ENCODE measurements at regions of chr6 and their contacts with region 1.

Region 1: GRCh38 chr6:30102970-30103874 is 9.7 kb downstream of the TRIM31 start:
- DNase-seq: peak; percentile 84
- H3K27ac ChIP-seq: peak overlapping the region; percentile 38
- CTCF ChIP-seq: peak; percentile 90

Region 2: GRCh38 chr6:30130887-30131862 is 28.0 kb after region 1 on chr6:
- CTCF ChIA-PET with region 1: interaction called, 32 read pairs
- POLR2A ChIA-PET with region 1: interaction called, 4 read pairs
- DNase-seq: peak; percentile 84
- H3K27ac ChIP-seq: no peak overlapping the region
- CTCF ChIP-seq: peak; percentile 97

Region 3: GRCh38 chr6:30154709-30155519 is 51.7 kb after region 1 on chr6:
- CTCF ChIA-PET with region 1: no interaction called
- POLR2A ChIA-PET with region 1: no interaction called
- DNase-seq: peak; percentile 91
- H3K27ac ChIP-seq: peak overlapping the region; percentile 46; the same call in 1 of the 2 replicates
- CTCF ChIP-seq: no peak

Region 4: DNA sequence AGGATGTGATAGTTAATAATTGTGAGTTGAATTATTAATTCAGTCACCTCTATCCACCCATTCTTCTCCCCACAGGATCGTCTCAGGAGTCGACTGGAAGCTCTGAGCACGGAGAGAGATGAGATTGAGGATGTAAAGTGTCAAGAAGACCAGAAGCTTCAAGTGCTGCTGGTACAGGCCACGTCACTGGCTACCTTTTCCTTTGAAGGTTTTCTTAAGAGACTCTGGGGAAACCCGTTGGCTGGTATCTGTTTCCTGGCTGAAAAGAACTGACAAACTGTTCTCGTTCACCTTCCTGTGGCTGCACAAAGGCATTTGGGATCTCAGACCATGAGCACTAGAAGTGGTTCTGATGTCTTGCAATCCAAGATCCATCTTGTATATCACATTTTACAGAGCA is 63.9 kb after region 1 on chr6:
- CTCF ChIA-PET with region 1: interaction called, 27 read pairs
- POLR2A ChIA-PET with region 1: no interaction called
- DNase-seq: no peak
- H3K27ac ChIP-seq: no peak overlapping the region
- CTCF ChIP-seq: no peak

Measured in RWPE1 (cell line).